ENCODE measurements at regions of chr6 and their contacts with region 1.

Region 1: DNA sequence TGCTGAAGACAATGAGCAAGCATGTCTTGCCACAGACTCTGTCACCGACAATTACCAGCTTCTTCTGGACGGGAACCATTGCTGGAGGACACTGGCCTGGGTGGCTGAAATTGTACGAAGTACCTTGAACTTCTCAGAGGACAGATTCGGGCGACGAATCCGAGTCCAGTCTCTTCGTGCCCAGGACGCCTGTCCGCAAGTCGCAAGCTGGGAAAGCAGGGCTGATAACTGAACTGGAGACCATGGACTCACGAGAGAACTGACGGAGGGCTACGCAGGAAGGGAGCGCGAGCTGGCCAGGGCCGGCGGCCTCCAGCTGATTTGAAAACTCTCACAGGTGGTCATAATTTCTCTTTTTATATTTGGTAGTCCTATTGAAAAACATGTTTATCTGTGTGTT is 1229.5 kb upstream of the MAP3K7 start:
- DNase-seq: no peak
- H3K4me3 Mint-ChIP-seq: no peak overlapping the region
- H3K27ac Mint-ChIP-seq: no peak overlapping the region
- H3K4me1 Mint-ChIP-seq: peaks cover 8% of the 10 kb centered on the region
- H3K27me3 Mint-ChIP-seq: no peaks in the 10 kb centered on the region
- CTCF ChIP-seq: no peak

Region 2: DNA sequence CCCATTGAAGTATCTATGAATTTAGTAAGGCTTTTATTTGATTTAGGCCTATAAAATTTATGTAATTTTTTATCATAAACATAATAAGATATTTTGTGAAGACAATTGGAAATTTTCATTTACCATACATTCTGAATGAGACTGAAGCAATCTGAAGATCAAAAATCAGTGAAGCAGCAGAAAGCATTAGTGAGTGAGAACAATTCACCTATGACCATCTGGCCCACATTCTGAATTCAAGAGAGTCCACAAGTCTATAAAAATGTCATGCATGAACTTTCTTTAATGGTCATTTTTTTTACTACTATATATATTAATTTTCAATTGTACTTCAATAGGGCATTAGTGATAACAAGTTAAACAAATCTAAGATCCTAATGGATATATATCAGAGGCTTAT is 202.9 kb before region 1 on chr6:
- CTCF ChIA-PET with region 1: no interaction called
- intact Hi-C with region 1: no loop called
- DNase-seq: no peak
- H3K4me3 Mint-ChIP-seq: no peak overlapping the region
- H3K27ac Mint-ChIP-seq: no peak overlapping the region
- H3K4me1 Mint-ChIP-seq: no peaks in the 10 kb centered on the region
- H3K27me3 Mint-ChIP-seq: no peaks in the 10 kb centered on the region
- CTCF ChIP-seq: no peak

Region 3: DNA sequence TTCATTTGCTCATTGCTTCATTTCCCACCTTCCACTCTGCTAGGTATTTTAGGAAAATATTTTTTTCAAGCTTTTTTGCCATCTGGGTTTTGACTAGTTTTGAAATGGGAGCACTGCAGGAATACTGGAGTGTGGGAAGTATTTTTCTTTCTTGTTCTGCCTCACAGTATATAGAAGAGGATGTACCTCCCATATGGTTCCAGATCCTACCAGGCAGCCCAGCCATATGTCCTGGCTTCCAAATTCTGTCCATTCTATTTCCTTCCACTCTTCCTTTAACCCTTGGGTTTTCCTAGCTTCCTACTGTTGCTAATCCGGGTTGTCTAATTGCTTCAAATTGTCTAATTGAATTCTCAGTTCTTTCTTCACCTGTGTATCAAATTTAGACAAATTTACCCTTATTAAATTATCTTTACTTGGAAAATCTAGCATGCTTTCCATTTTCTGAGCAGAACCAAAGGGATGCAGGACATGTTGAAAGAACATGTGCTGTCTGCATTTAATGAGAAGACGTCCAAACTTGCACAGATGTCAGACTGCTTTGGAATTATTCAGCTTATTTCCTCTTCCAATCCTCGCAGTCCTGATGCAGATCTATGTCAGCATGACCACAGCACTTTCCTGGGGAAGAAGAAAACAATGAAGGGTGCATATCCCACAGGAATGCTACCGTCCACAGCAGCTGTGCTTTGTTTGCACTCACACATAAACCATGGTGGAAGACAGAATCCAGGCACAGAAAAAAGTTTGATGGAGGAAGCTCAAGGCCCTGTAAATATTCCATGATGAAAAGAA is 44.4 kb after region 1 on chr6:
- CTCF ChIA-PET with region 1: no interaction called
- intact Hi-C with region 1: loop called (anchors 5 kb)
- DNase-seq: no peak
- H3K4me3 Mint-ChIP-seq: no peak overlapping the region
- H3K27ac Mint-ChIP-seq: no peak overlapping the region
- H3K4me1 Mint-ChIP-seq: peaks cover 7% of the 10 kb centered on the region
- H3K27me3 Mint-ChIP-seq: no peaks in the 10 kb centered on the region
- CTCF ChIP-seq: no peak